ENCODE measurements at regions of chr18 and their contacts with region 1.

Region 1: GRCh38 chr18:13879937-13880336 is 35.4 kb downstream of the MC2R start:
- DNase-seq: no peak
- ATAC-seq: no peak
- H3K4me3 Mint-ChIP-seq: no peak overlapping the region
- H3K27ac Mint-ChIP-seq: no peak overlapping the region
- H3K4me1 Mint-ChIP-seq: no peaks in the 10 kb centered on the region
- H3K27me3 Mint-ChIP-seq: no peaks in the 10 kb centered on the region
- CTCF ChIP-seq: no peak

Region 2: GRCh38 chr18:13900631-13901030 is 20.7 kb after region 1 on chr18:
- CTCF ChIA-PET with region 1: no interaction called
- POLR2A ChIA-PET with region 1: no interaction called
- intact Hi-C with region 1: loop called (anchors 2 kb)
- DNase-seq: no peak
- ATAC-seq: no peak
- H3K4me3 Mint-ChIP-seq: no peak overlapping the region
- H3K27ac Mint-ChIP-seq: no peak overlapping the region
- H3K4me1 Mint-ChIP-seq: no peaks in the 10 kb centered on the region
- H3K27me3 Mint-ChIP-seq: peaks cover 8% of the 10 kb centered on the region
- CTCF ChIP-seq: no peak

Measured in activated CD8-positive, alpha-beta T cell treated with anti-CD3 and anti-CD28 coated beads for 36 hours (primary cell).